ENCODE measurements at regions of chr9 and their contacts with region 1.

Region 1: DNA sequence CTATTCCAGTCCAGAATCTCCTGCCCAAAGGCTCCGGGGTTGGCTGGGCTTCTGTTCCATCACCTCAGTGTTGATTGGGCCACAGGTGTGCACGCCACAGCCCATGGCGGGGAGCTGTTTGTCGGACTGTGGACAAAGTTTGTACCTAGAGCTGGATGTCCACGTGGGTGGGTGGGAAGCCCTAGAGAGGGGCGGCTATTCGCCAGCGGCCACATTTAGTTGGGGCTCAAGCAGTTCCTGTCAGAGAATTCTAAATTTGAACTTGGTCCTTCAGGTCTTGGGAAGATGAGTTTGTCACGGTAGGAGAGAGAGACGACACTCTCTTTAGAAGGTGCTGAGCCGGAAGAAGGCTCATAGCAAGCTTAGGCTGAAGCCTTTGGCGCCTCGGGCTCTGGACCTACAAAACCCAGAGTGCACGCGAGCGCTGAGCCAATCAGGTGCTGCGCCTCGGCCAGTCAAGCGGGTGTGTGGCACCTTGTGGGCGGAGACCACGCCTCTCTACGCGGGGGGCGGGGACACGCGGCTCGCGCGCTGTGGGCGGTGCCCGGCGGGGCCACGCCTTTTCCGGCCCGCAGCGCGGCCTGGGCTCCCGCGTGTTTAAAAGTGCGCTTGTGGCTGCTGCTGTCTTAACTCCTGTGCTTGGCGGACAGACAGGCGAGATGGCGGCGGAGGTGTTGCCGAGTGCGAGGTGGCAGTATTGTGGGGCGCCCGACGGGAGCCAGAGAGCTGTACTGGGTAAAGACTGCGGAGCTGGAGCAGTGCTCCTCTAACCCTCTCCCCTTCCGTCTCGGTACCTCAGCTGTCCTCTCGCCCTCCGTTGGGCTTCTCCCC is at the start of gene POLR1E:
- DNase-seq: peak; percentile 97
- H3K4me3 ChIP-seq: peak within 1 kb of the TSS; percentile 53 to 79 (median 69)
- H3K27ac ChIP-seq: peak within 1 kb of the TSS; percentile 82 to 95 (median 91)
- H3K4me1 ChIP-seq: peaks cover 0 to 33% (median 28%) of the 10 kb centered on the region in 4 donors
- H3K27me3 ChIP-seq: no peaks in the 10 kb centered on the region
- CTCF ChIP-seq: no peak
- EP300 ChIP-seq: no peak
- POLR2A ChIP-seq: peak; percentile 43 to 70
- total RNA-seq, gene POLR1E: 17.4 to 33.4 (median 28.1) TPM

Region 2: DNA sequence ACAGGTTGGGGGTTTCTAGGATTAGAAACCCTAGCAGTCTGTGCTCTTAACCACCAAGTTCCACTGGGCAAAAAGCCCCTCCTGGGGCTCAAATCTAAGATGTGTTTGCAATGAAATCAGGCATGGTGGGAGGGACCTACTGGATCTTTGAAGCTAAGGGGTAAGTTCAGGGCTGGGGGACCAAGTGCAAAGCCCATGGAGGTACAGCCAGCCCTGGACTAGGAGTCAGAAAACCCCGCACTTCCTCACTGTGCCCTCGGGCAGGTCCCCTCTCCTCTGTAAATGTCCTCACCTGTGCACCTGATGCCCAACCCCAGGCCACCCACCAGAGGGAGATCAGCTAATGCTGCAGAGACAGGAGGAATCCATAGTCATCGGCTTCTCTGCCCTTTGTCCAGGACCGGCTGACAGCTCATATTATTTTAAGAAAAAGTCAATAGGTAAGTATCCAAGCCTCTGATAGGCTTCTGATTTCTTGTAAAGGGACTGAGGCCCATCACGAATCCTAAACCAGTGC is 589.8 kb before region 1 on chr9:
- intact Hi-C with region 1: no loop called
- DNase-seq: peak; percentile 26
- H3K4me3 ChIP-seq: no peak overlapping the region
- H3K27ac ChIP-seq: no peak overlapping the region
- H3K4me1 ChIP-seq: no peaks in the 10 kb centered on the region
- H3K27me3 ChIP-seq: peaks cover 0 to 34% (median 0%) of the 10 kb centered on the region in 3 donors
- CTCF ChIP-seq: no peak
- EP300 ChIP-seq: no peak
- POLR2A ChIP-seq: no peak

Region 3: DNA sequence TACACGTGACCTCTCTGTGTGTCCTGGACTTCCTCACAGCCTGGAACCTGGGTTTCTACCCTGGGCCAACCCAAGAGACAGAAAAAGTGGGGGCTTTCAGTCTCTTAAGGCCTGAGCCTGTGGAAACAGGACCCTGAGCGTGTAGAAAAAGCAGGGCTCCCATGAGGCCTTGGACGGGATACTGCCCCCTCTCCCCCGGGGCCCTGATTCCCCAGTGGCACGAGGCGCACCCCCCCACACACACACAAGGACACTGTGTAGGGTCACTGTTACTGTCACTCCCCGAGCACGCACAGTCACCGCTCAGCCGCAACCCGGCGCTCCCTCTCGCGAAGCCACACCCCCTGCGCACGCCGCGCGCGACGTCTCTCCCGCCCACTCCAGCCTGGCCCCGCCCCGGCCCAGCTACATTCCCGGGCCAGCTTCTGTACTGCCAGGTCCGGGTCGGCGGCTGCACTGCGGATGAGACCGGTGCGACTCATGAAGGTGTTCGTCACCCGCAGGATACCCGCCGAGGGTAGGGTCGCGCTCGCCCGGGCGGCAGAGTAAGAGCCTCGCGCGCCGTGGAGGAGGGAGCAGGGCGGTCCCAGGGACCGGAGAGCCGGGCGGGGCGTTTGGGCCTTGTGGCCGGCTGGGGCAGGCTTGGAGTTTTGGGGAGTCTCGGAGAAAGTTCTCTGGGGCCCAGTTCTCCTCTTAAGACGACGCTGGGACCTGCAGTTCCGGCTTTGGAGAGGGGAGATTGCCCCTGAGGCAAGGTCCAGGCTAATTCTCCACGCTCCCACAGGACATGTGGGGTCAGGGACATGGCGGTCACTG is 63.1 kb before region 1 on chr9 and contains the start of gene GRHPR:
- intact Hi-C with region 1: loop called (anchors 5 kb)
- DNase-seq: peak; percentile 93
- H3K4me3 ChIP-seq: peak within 1 kb of the TSS; percentile 72 to 91 (median 76)
- H3K27ac ChIP-seq: peak within 1 kb of the TSS; percentile 87 to 93 (median 88)
- H3K4me1 ChIP-seq: peaks cover 0 to 38% (median 31%) of the 10 kb centered on the region in 4 donors
- H3K27me3 ChIP-seq: no peaks in the 10 kb centered on the region
- CTCF ChIP-seq: no peak
- EP300 ChIP-seq: no peak
- POLR2A ChIP-seq: peak; percentile 52 to 67
- total RNA-seq, gene GRHPR: 127 to 165 (median 157) TPM

Region 4: DNA sequence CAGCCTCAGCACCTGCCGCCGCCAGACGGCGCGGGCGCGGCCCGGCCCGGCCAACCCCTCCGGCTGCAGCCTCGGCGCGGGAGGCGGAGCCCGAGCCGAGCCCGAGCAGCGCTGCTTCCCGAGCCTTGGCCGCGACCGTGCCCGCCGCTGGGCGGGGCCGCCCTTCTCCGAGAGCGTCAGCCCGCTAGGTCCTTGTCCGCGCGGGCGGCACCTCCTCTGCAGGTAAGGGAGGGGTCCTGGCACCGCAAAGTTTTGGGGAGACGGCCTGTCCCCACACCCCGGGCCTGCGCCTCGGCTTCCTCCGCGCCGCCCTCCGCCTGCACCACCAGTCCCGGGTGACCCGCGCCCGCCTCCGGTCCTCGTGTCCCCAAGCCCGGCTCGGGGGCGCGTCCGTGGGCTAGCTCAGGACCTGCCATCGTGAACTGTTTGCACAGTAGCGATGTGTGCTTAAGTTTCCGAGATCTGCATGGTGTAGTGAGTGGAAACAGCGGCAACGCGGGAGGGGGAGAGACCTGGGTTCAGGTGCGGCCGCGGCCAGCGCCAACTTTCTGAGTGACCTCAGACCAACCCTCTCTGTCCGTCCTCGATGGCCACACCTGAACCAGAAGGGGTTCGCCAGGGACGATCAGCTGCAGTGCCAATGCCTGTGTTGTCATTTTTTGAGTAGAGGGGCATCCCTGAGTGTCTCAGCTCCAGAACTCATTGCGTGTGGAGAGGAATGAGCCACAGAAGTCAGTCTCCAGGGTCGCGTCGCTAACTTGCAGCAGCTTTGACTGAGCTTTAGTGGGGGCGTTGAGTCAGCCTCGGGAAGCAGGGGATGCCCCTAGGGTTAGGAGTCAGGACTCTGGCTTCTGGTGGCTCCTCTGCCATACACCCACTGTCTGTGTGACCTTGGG is 165.5 kb after region 1 on chr9 and contains the start of gene FRMPD1:
- intact Hi-C with region 1: loop called (anchors 5 kb)
- DNase-seq: peak; percentile 74
- H3K4me3 ChIP-seq: peak within 1 kb of the TSS; percentile 41 to 70 (median 58)
- H3K27ac ChIP-seq: no peak within 1 kb of the TSS
- H3K4me1 ChIP-seq: peaks cover 0 to 12% (median 8%) of the 10 kb centered on the region in 4 donors
- H3K27me3 ChIP-seq: peaks cover 0 to 36% (median 20%) of the 10 kb centered on the region in 3 donors
- CTCF ChIP-seq: no peak
- EP300 ChIP-seq: no peak
- POLR2A ChIP-seq: no peak
- total RNA-seq, gene FRMPD1: 0.16 to 0.71 (median 0.34) TPM

Region 5: GRCh38 chr9:37753489-37754190 is 268.0 kb after region 1 on chr9 and contains the start of gene TRMT10B:
- intact Hi-C with region 1: loop called (anchors 10 kb)
- DNase-seq: peak; percentile 75
- H3K4me3 ChIP-seq: peak within 1 kb of the TSS; percentile 67 to 80 (median 68)
- H3K27ac ChIP-seq: peak within 1 kb of the TSS; percentile 79 to 86 (median 81)
- H3K4me1 ChIP-seq: peaks cover 0 to 10% (median 7%) of the 10 kb centered on the region in 4 donors
- H3K27me3 ChIP-seq: no peaks in the 10 kb centered on the region
- CTCF ChIP-seq: peak in 2 of 4 experiments; percentile 20 to 21
- EP300 ChIP-seq: no peak
- POLR2A ChIP-seq: peak; percentile 8 to 14
- total RNA-seq, gene TRMT10B: 5.3 to 9.7 (median 7.9) TPM

Region 6: GRCh38 chr9:37784616-37785483 is 299.2 kb after region 1 on chr9 and contains the start of gene EXOSC3:
- intact Hi-C with region 1: loop called (anchors 10 kb)
- DNase-seq: peak; percentile 93
- H3K4me3 ChIP-seq: peak within 1 kb of the TSS; percentile 84 to 92 (median 86)
- H3K27ac ChIP-seq: peak within 1 kb of the TSS; percentile 85 to 89 (median 86)
- H3K4me1 ChIP-seq: peaks cover 0 to 19% (median 14%) of the 10 kb centered on the region in 4 donors
- H3K27me3 ChIP-seq: peaks cover 0 to 5% (median 4%) of the 10 kb centered on the region in 3 donors
- CTCF ChIP-seq: peak in 1 of 4 experiments; percentile 15
- EP300 ChIP-seq: no peak
- POLR2A ChIP-seq: peak; percentile 61 to 63
- total RNA-seq, gene EXOSC3: 38.7 to 44.6 (median 41.3) TPM

Region 7: GRCh38 chr9:37903647-37904444 is 418.2 kb after region 1 on chr9 and contains the start of gene SLC25A51:
- intact Hi-C with region 1: loop called (anchors 10 kb)
- DNase-seq: peak; percentile 97
- H3K4me3 ChIP-seq: peak within 1 kb of the TSS; percentile 68 to 92 (median 92)
- H3K27ac ChIP-seq: peak within 1 kb of the TSS; percentile 83 to 95 (median 92)
- H3K4me1 ChIP-seq: peaks cover 0 to 28% (median 24%) of the 10 kb centered on the region in 4 donors
- H3K27me3 ChIP-seq: no peaks in the 10 kb centered on the region
- CTCF ChIP-seq: peak; percentile 85 to 98 (median 93)
- EP300 ChIP-seq: no peak
- POLR2A ChIP-seq: peak; percentile 9 to 54
- total RNA-seq, gene SLC25A51: 19.3 to 31.0 (median 27.3) TPM

Region 8: GRCh38 chr9:38392235-38393127 is 906.9 kb after region 1 on chr9 and contains the start of gene ALDH1B1:
- intact Hi-C with region 1: loop called (anchors 10 kb)
- DNase-seq: peak; percentile 93
- H3K4me3 ChIP-seq: peak within 1 kb of the TSS; percentile 64 to 88 (median 72)
- H3K27ac ChIP-seq: peak within 1 kb of the TSS; percentile 84 to 97 (median 88)
- H3K4me1 ChIP-seq: peaks cover 0 to 84% (median 59%) of the 10 kb centered on the region in 4 donors
- H3K27me3 ChIP-seq: no peaks in the 10 kb centered on the region
- CTCF ChIP-seq: no peak
- EP300 ChIP-seq: peak in 1 of 4 donors; percentile 7
- POLR2A ChIP-seq: peak; percentile 65 to 75
- total RNA-seq, gene ALDH1B1: 35.7 to 162 (median 101) TPM

Measured in sigmoid colon (tissue), 7 donors.